GM12878 (cell line): ENCODE measurements at regions of chr17 and their contacts with region 1.

Region 1: DNA sequence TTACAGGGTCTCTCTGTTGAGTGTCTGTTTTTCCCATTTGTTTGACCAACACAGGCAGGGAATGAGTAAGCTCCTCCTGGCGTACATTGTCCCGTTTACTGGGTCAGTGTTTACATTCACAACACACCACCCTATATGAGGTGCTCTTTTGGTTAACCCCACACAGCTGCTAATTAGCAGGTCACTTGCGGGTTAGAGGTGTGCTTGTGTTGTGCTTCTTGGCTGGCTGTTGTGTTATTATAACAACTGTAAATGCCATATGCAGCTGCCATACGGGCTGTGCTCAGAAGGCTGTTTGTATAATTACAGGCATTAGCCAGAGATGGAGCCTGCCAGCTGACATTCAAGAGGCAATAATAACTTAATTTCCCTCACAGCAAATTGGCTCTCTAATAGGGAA is 205.1 kb upstream of the ELAC2 start:
- DNase-seq: no peak
- ATAC-seq: no peak
- H3K4me3 ChIP-seq: no peak overlapping the region
- H3K27ac ChIP-seq: no peak overlapping the region
- H3K4me1 ChIP-seq: no peaks in the 10 kb centered on the region
- H3K27me3 ChIP-seq: no peaks in the 10 kb centered on the region
- CTCF ChIP-seq: no peak
- EP300 ChIP-seq: no peak
- POLR2A ChIP-seq: no peak
- RAD21 ChIP-seq: no peak

Region 2: DNA sequence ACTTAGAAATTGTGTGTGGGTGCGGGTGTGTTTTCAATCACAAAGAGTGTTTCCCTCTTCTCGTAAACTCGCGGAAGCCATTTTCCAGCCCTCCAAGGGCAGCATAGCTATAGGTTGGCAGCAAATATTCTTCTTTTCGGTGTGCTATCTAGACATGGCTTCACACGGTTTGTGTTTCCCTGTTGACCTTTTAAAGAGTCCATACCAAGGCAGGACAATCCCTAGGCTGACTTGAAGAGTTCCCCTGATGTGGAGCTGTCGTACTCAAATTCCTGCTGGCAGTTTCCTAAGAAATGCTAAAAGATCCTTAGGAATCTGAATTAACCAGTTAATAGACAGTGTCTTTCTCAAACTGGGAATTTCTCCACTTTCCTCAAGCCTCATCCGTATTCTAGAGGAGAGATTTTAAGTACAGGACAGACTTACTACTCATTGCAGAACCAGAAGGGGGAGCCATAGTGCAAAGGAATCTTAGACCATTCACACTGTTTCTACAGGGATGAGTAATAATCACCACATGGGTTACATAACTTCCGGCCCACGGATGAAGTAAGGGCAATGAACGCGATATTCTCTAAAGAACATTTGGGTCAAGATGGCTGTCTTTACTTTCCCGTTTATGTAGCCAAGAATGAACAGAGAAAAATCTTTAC is 83.5 kb after region 1 on chr17:
- CTCF ChIA-PET with region 1: no interaction called
- POLR2A ChIA-PET with region 1: no interaction called
- RAD21 ChIA-PET with region 1: no interaction called
- SMC1A ChIA-PET with region 1: no interaction called
- in situ Hi-C with region 1: loop called (anchors 25 kb)
- intact Hi-C with region 1: no loop called
- DNase-seq: no peak
- ATAC-seq: no peak
- H3K4me3 ChIP-seq: no peak overlapping the region
- H3K27ac ChIP-seq: no peak overlapping the region
- H3K4me1 ChIP-seq: no peaks in the 10 kb centered on the region
- H3K27me3 ChIP-seq: no peaks in the 10 kb centered on the region
- CTCF ChIP-seq: peak in 2 of 3 experiments; percentile 6 to 13; a peak in 1 of 6 replicates
- EP300 ChIP-seq: no peak
- POLR2A ChIP-seq: no peak
- RAD21 ChIP-seq: no peak